ENCODE measurements at regions of chr12 and their contacts with region 1.

Region 1: DNA sequence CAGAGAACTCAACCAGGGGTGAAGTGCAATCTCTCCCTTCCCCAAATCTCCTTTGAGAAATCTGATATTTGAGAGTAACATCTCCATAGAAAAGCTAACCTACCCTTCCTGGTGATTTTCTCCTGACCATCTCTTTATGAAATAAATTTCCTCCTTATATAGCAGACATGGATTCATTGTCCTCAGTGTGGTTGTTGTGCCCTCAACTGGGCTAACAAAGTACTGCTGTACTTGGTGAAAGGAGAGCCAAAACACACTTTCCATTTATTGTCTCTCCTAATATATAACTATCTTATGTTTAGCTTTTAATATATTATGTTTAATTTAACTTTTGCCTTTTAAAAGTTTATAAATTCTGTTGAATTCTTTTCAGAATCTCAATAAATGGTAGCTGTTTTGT is 65.1 kb upstream of the SLCO1B1 start:
- DNase-seq: no peak
- H3K4me3 ChIP-seq: no peak overlapping the region
- H3K27ac ChIP-seq: no peak overlapping the region
- H3K4me1 ChIP-seq: no peaks in the 10 kb centered on the region
- H3K27me3 ChIP-seq: no peaks in the 10 kb centered on the region
- CTCF ChIP-seq: peak; percentile 38 to 63 (median 63)
- EP300 ChIP-seq: no peak
- POLR2A ChIP-seq: no peak

Region 2: DNA sequence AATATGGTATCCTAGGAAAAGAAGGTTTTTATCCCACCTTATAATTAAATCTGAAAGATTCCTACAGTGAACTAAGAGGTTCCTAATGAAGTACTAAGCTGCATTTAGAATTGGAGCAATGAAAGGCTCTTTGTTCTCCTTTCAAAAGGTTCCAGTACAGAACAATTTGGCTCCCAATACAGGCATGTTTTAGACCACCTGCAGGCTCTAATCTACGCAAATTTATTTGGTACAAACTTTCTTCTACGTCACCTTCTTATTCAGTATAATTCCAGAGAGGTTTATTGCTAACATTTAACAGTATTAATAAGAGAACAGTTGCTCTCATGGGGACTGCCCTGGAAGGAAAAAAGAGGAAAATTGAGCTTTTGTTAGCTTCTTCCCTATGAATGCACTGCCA is 408.3 kb before region 1 on chr12:
- intact Hi-C with region 1: loop called (anchors 10 kb)
- DNase-seq: no peak
- H3K4me3 ChIP-seq: no peak overlapping the region
- H3K27ac ChIP-seq: no peak overlapping the region
- H3K4me1 ChIP-seq: peaks cover 0 to 3% (median 0%) of the 10 kb centered on the region in 4 donors
- H3K27me3 ChIP-seq: no peaks in the 10 kb centered on the region
- CTCF ChIP-seq: no peak
- EP300 ChIP-seq: no peak
- POLR2A ChIP-seq: no peak

Region 3: DNA sequence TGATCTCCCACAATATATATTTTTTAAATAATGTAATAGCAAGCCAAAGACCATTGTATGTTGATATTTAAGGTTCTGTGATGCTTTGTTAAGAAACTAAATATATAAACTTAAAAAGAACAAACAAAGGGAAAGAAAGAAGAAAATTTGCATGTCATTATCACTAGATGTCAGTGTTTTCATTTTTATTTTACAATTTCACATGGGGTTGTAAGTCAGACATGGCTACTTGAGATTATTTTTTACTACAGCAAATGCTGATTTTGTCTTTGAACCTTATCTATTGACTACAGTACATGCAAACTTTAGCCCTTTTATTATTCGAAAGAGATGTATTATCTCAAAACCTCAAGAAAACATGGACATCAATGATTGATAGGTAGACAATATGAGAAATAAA is 334.6 kb before region 1 on chr12:
- intact Hi-C with region 1: loop called (anchors 2 kb)
- DNase-seq: no peak
- H3K4me3 ChIP-seq: no peak overlapping the region
- H3K27ac ChIP-seq: no peak overlapping the region
- H3K4me1 ChIP-seq: no peaks in the 10 kb centered on the region
- H3K27me3 ChIP-seq: no peaks in the 10 kb centered on the region
- CTCF ChIP-seq: no peak
- EP300 ChIP-seq: no peak
- POLR2A ChIP-seq: no peak

Region 4: DNA sequence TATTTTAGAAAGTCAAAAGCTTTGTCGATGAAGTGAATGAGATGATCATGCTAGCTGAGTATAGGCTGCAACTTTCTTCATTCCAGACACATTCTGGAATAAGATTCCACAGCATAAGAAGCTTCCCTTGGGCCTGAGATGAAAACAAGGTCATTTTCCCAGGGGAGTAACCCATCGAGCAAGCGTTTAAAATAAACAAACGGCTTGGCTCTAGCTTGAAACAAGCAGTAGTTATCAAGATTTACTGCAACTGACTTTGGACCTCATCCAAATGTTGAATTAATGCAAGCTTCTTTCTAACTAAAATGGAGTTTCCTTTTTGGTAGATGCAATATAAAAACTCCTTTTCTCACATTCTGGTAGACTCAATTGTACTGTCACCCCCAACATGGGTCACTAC is 685.7 kb after region 1 on chr12:
- intact Hi-C with region 1: no loop called
- DNase-seq: no peak
- H3K4me3 ChIP-seq: no peak overlapping the region
- H3K27ac ChIP-seq: no peak overlapping the region
- H3K4me1 ChIP-seq: peaks cover 5 to 10% (median 8%) of the 10 kb centered on the region in 4 donors
- H3K27me3 ChIP-seq: no peaks in the 10 kb centered on the region
- CTCF ChIP-seq: no peak
- EP300 ChIP-seq: no peak
- POLR2A ChIP-seq: no peak

Measured in esophagus muscularis mucosa (tissue), 4 donors.